ENCODE measurements at regions of chr11 and their contacts with region 1.

Region 1: GRCh38 chr11:83156150-83156995 is 558 bp upstream of the PCF11 start:
- DNase-seq: no peak
- ATAC-seq: peak; percentile 91
- H3K4me3 Mint-ChIP-seq: peak overlapping the region; percentile 100
- H3K27ac Mint-ChIP-seq: peak overlapping the region; percentile 100
- H3K4me1 Mint-ChIP-seq: peaks cover 29% of the 10 kb centered on the region
- H3K27me3 Mint-ChIP-seq: no peaks in the 10 kb centered on the region

Region 2: DNA sequence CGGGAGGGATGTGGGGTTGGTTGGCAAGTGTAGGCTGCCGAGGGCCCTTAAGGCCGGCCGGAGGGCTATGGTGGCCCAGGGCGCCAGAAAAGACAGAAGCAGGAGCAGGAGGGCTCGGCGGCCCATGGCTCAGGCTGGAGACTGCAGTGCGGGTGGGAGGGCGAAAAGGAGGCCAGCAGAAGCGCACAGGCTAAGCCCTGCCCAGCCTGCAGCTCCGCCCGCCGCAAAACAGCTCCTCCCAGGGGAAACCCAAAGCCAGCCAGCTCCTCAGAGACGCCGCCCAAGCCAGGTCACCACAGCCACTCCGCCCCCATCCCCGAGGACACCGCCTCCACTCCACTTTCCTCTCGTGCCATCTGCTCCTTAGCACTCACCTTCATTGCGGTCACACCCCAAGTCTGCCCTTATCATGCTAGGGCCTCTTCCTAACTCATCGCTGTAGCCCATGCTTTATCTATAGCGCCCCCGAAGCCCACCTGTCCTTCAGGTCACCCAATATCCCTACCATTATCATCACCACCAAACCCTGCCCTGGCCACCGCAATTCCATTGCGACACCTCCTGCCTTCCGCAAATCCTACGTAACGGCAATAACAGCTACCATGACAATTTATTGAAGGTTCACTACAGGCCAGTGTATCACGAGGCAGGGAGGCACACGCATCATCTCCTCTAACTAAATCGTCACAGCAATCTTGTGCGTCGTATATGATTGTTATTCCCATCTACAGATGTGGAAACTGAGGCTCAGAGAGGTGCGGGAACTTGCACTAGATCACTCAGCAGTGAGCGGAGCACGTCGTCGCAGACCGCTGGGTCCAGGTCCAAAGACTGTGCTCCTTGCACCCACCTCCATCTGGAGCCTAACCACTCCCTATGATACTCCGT is 255.9 kb before region 1 on chr11 and contains the start of gene PRCP:
- POLR2A ChIA-PET with region 1: interaction called, 43 read pairs
- DNase-seq: peak; percentile 89
- ATAC-seq: peak; percentile 78
- H3K4me3 Mint-ChIP-seq: peak within 1 kb of the TSS; percentile 99
- H3K27ac Mint-ChIP-seq: peak within 1 kb of the TSS; percentile 99
- H3K4me1 Mint-ChIP-seq: peaks cover 50% of the 10 kb centered on the region
- H3K27me3 Mint-ChIP-seq: no peaks in the 10 kb centered on the region
- total RNA-seq, gene PRCP: 21.3 to 25.6 TPM

Region 3: GRCh38 chr11:82924522-82925224 is 231.7 kb before region 1 on chr11:
- POLR2A ChIA-PET with region 1: interaction called, 10 read pairs
- DNase-seq: no peak
- ATAC-seq: no peak
- H3K4me3 Mint-ChIP-seq: no peak overlapping the region
- H3K27ac Mint-ChIP-seq: peak overlapping the region; percentile 19
- H3K4me1 Mint-ChIP-seq: peaks cover 33% of the 10 kb centered on the region
- H3K27me3 Mint-ChIP-seq: no peaks in the 10 kb centered on the region

Region 4: GRCh38 chr11:83063073-83063754 is 93.2 kb before region 1 on chr11:
- POLR2A ChIA-PET with region 1: interaction called, 19 read pairs
- DNase-seq: no peak
- ATAC-seq: peak; percentile 78
- H3K4me3 Mint-ChIP-seq: peak overlapping the region; percentile 83
- H3K27ac Mint-ChIP-seq: peak overlapping the region; percentile 97
- H3K4me1 Mint-ChIP-seq: peaks cover 22% of the 10 kb centered on the region
- H3K27me3 Mint-ChIP-seq: no peaks in the 10 kb centered on the region

Region 5: DNA sequence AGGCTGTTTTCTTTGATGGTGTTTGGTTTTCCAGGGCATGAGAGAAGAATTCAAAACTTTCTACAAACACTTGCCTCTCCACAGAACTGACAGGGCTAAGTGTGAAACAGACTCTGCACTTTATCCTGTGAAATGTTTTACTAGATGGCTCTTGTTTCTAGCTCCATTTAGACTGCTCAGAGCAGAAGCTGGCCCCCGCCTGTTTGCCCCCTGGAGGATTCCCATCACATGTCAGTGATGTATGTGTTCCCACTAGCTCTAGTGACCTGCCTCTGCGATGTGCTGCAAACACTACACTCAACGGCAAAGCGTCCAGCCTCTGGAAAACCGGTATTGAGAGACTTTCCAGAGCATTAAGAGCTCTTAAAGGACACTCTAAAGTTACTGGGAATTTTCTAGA is 40.8 kb before region 1 on chr11:
- POLR2A ChIA-PET with region 1: interaction called, 82 read pairs
- DNase-seq: no peak
- ATAC-seq: no peak
- H3K4me3 Mint-ChIP-seq: peak overlapping the region; percentile 67
- H3K27ac Mint-ChIP-seq: no peak overlapping the region
- H3K4me1 Mint-ChIP-seq: peaks cover 27% of the 10 kb centered on the region
- H3K27me3 Mint-ChIP-seq: no peaks in the 10 kb centered on the region

Region 6: DNA sequence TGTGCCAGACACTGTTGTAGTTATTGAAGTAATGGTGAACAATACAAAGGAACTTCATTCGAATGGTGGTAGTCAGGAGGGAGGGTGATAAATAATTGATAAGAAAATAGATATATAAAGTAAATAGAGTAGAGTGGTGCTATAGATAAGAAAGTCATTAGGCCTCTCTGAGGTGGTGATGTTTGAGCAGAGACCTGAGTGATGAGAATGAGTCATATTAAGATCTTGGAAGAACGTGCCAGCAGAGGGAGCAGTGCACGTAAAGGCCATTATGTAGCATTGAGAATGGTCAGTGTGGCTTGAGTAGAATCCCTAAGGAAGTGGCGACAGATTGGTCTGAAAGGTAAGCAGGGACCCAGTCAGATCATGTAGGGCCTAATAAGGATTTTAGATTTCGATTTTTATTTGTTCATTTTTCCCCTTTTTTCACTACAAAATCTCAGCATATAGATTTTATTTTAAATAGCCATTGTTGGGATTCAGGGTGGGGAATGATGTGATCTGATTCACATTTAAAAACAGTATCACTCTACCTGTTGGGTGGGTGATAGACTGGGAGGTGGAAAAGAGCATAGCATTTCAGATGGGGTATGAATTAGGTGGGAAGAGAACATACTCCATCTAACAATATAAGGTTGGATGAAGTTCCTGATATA is 85.0 kb after region 1 on chr11:
- POLR2A ChIA-PET with region 1: no interaction called
- DNase-seq: no peak
- ATAC-seq: no peak
- H3K4me3 Mint-ChIP-seq: no peak overlapping the region
- H3K27ac Mint-ChIP-seq: no peak overlapping the region
- H3K4me1 Mint-ChIP-seq: no peaks in the 10 kb centered on the region
- H3K27me3 Mint-ChIP-seq: no peaks in the 10 kb centered on the region

Region 7: DNA sequence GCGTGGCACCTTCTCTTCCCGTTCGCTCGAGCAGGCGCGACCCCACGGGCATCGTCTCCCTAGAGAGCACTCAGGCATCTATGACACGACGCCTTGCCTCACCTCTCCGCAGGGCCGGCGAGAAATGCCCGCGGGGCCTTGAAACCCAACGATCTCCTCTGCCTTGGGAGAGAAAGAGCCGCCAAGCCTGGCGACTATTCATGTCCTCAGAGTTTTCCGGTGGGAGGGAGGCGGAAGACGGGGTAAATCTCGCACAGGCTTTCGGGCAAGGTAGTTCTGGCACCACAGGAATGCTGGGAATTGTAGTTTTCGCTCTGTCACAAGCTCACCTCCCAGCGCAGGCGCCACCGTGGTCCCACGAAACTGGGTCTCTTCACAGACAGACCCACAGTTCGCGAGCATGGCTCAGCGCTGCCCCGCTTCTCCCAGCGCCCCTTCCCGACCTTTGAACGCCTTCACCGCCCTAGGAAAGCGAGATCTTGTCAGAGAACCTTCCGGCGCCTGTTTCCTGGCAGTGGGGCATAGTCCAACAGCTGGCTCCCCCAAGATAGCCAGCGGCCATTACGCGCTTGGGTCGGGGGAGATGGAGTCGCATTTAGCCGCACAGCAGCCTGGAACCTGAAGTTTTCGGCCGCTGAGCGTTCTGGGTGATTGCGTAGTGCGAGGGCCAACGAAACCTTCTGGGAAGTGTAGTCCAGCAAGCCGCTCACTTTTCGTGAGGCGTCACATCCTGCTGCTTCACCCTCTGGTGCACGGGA is 129.6 kb after region 1 on chr11 and contains the start of gene CCDC90B:
- POLR2A ChIA-PET with region 1: interaction called, 10 read pairs
- DNase-seq: peak; percentile 85
- ATAC-seq: peak; percentile 93
- H3K4me3 Mint-ChIP-seq: peak within 1 kb of the TSS; percentile 98
- H3K27ac Mint-ChIP-seq: peak within 1 kb of the TSS; percentile 99
- H3K4me1 Mint-ChIP-seq: peaks cover 27% of the 10 kb centered on the region
- H3K27me3 Mint-ChIP-seq: peaks cover 2% of the 10 kb centered on the region
- total RNA-seq, gene CCDC90B: 33.6 to 34.4 TPM